ENCODE measurements at regions of chr12 and their contacts with region 1.

Region 1: DNA sequence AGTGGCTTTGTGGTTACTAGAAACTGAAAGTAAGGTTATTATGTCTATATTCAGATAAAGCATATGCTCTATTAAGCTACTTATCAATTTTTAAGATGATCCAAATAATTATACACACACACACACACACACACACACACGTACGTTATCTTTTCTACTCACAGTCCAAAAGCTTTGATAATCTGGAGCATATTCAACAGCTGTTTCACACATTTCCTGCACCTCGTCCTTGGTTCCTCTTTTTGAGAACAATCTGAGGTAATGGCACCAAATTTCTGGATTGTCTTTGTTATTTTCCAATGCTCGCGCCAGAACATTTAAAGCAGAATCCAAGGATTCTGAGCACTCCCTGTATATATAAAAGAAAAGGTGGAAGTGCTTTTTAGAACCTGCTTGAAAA is 37.5 kb downstream of the ZFC3H1 start:
- DNase-seq: no peak
- H3K4me3 Mint-ChIP-seq: no peak overlapping the region
- H3K27ac Mint-ChIP-seq: no peak overlapping the region
- H3K4me1 Mint-ChIP-seq: peaks cover 24% of the 10 kb centered on the region
- H3K27me3 Mint-ChIP-seq: no peaks in the 10 kb centered on the region

Region 2: GRCh38 chr12:71610031-71610795 is 15.9 kb before region 1 on chr12:
- CTCF ChIA-PET with region 1: interaction called, 3 read pairs
- intact Hi-C with region 1: loop called (anchors 2 kb)
- DNase-seq: no peak
- H3K4me3 Mint-ChIP-seq: no peak overlapping the region
- H3K27ac Mint-ChIP-seq: peak overlapping the region; percentile 77
- H3K4me1 Mint-ChIP-seq: peaks cover 24% of the 10 kb centered on the region
- H3K27me3 Mint-ChIP-seq: no peaks in the 10 kb centered on the region